HEK293 (cell line): ENCODE measurements at regions of chr19 and their contacts with region 1.

Region 1: GRCh38 chr19:1026189-1027019 is at the start of gene CNN2:
- H3K4me3 ChIP-seq: peak within 1 kb of the TSS; percentile 55
- H3K27ac ChIP-seq: peak within 1 kb of the TSS; percentile 47
- H3K4me1 ChIP-seq: peaks cover 5% of the 10 kb centered on the region; the same call in 1 of the 2 replicates
- CTCF ChIP-seq: no peak

Region 2: DNA sequence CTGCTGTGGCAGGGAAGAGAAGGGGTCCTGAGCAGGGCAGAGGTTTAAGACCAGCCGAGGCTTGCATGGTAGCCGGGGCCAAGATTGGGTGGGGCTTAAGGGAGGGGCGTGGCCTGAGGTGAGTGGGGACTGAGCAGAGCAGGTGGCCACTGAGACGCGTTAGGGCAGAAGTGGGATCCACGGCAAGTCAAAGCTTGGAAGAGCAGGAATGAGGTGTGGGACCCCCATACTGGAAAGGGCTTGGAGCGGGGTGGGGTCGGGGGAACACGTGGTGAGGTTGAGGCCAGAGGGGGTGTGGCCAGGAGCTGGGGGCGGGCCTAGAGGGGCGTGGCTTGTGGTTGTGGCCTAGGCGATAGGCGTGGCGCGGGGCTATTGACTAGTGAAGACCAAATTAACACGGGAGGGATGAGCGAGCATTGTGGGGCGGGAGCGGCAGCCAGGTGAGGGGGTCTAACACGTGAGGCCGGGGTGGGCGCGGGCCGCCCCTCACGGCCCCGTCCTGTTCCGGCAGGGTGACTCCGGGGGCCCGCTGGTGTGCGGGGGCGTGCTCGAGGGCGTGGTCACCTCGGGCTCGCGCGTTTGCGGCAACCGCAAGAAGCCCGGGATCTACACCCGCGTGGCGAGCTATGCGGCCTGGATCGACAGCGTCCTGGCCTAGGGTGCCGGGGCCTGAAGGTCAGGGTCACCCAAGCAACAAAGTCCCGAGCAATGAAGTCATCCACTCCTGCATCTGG is 163.7 kb before region 1 on chr19:
- CTCF ChIA-PET with region 1: no interaction called
- POLR2A ChIA-PET with region 1: no interaction called
- H3K4me3 ChIP-seq: no peak overlapping the region
- H3K27ac ChIP-seq: no peak overlapping the region
- H3K4me1 ChIP-seq: no peaks in the 10 kb centered on the region
- CTCF ChIP-seq: no peak

Region 3: DNA sequence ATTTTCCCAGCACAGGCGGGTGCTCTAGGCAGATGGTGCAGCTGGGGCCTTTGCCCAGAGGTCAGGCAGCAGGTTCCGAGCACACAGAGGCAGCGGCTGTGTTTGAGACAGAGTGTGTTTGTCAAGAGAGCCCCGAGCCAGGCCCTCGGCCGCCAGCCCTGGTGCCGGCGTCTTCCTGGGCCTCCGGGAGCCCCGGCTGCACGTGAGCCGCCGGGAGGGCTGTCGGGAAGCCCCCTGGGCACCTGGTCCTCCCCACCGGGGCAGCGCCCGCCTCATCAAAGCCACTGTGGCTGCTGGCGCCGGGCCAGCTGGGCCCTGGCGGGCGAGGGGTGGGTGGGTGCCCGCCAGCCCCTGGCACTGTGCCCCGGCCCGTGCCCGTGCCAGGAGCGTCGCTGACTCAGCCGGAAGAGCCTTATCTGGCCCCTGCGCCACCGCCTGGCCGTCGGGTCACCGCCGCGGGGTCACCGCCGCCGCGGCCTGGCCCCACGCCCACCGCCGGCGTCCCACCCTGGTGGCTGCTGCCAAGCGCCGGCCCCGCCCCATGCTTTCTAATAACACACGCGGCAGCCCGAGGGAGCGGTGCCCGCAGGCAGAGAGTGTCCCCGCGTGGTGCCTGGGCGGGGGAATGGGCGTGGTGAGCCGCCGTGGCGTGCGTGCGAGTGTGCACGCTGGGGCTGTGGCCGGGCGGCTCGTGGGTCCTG is 85.7 kb before region 1 on chr19:
- CTCF ChIA-PET with region 1: no interaction called
- POLR2A ChIA-PET with region 1: no interaction called
- H3K4me3 ChIP-seq: no peak overlapping the region
- H3K27ac ChIP-seq: no peak overlapping the region
- H3K4me1 ChIP-seq: no peaks in the 10 kb centered on the region
- CTCF ChIP-seq: no peak

Region 4: DNA sequence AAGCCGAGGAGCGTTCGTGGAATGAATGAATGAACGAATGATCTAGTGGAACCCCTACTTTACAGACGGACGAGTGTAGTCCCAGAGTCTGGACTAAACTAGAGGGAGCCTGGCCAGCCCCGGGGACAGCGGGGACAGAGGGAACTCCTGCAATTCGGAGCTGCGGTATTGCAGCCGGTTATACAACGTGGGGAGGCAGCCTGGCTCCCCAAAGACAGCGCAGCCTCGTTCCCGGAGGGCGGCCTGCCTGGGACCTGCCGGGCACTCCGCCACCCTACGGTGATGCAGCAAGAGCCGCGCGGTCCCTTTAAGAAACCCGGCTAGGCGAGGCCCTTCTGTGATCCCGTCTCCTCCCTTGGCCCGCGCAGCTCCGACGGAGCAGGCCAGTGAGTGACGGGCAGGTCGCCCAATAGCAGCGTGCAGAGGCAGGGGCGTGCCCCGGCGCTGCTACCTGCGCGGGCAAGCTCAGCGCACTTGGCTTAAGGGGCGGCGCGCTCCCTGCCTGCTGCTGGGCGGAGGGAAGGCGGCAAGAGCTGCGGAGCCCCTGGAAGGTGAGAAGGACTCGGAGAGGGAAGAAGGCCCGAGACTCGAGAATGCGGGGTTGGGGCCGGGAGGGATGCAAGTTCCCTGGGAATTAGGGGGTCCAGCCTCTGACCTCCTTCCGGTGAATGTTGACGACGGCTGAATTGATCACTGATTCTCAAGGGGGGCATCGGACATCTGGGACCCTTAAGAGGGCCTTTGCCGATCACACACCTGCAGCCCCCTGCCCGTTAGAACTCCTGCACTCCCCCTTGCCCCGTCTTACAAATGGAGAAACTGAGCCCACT is 13.5 kb after region 1 on chr19 and contains the start of gene ABCA7:
- CTCF ChIA-PET with region 1: interaction called, 3 read pairs
- POLR2A ChIA-PET with region 1: interaction called, 60 read pairs
- H3K4me3 ChIP-seq: peak within 1 kb of the TSS; percentile 54
- H3K27ac ChIP-seq: peak within 1 kb of the TSS; percentile 21; the same call in 1 of the 2 replicates
- H3K4me1 ChIP-seq: no peaks in the 10 kb centered on the region; the same call in 1 of the 2 replicates
- CTCF ChIP-seq: peak; percentile 39; the same call in 1 of the 2 replicates

Region 5: GRCh38 chr19:1046836-1047695 is 20.7 kb after region 1 on chr19:
- CTCF ChIA-PET with region 1: no interaction called
- POLR2A ChIA-PET with region 1: interaction called, 60 read pairs
- H3K4me3 ChIP-seq: no peak overlapping the region
- H3K27ac ChIP-seq: no peak overlapping the region
- H3K4me1 ChIP-seq: no peaks in the 10 kb centered on the region; the same call in 1 of the 2 replicates
- CTCF ChIP-seq: no peak

Region 6: DNA sequence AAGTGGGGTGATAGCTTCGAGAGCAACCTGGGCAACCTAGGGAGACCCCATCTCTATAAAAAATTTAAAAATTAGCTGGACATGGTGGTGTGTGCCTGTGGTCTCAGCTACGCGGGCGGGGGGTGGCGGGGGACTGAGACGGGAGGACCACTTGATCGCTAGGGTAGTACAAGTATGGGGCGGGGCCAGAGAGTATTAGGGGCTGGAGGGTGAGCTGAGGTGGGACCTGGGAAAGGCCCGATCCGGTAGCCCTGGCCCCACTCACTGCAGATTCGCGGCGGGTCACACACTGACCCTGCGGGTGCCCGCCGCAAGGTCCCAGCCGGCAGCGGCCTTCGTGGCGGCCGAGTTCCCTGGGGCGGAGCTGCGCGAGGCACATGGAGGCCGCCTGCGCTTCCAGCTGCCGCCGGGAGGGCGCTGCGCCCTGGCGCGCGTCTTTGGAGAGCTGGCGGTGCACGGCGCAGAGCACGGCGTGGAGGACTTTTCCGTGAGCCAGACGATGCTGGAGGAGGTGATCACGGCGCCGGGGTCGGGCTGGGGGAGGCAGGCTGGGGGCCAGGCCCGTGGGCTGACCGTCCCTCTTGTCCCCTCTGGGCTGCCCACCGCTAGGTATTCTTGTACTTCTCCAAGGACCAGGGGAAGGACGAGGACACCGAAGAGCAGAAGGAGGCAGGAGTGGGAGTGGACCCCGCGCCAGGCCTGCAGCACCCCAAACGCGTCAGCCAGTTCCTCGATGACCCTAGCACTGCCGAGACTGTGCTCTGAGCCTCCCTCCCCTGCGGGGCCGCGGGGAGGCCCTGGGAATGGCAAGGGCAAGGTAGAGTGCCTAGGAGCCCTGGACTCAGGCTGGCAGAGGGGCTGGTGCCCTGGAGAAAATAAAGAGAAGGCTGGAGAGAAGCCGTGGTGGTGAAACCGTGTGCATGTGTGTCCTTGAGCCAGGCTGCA is 38.5 kb after region 1 on chr19:
- CTCF ChIA-PET with region 1: interaction called, 11 read pairs
- POLR2A ChIA-PET with region 1: interaction called, 3 read pairs
- H3K4me3 ChIP-seq: no peak overlapping the region
- H3K27ac ChIP-seq: no peak overlapping the region
- H3K4me1 ChIP-seq: peaks cover 2% of the 10 kb centered on the region; the same call in 1 of the 2 replicates
- CTCF ChIP-seq: peak; percentile 94

Region 7: GRCh38 chr19:1082172-1082927 is 55.9 kb after region 1 on chr19:
- CTCF ChIA-PET with region 1: no interaction called
- POLR2A ChIA-PET with region 1: interaction called, 18 read pairs
- H3K4me3 ChIP-seq: no peak overlapping the region
- H3K27ac ChIP-seq: no peak overlapping the region
- H3K4me1 ChIP-seq: no peaks in the 10 kb centered on the region
- CTCF ChIP-seq: no peak